ENCODE measurements at regions of chr1 and their contacts with region 1.

Region 1: DNA sequence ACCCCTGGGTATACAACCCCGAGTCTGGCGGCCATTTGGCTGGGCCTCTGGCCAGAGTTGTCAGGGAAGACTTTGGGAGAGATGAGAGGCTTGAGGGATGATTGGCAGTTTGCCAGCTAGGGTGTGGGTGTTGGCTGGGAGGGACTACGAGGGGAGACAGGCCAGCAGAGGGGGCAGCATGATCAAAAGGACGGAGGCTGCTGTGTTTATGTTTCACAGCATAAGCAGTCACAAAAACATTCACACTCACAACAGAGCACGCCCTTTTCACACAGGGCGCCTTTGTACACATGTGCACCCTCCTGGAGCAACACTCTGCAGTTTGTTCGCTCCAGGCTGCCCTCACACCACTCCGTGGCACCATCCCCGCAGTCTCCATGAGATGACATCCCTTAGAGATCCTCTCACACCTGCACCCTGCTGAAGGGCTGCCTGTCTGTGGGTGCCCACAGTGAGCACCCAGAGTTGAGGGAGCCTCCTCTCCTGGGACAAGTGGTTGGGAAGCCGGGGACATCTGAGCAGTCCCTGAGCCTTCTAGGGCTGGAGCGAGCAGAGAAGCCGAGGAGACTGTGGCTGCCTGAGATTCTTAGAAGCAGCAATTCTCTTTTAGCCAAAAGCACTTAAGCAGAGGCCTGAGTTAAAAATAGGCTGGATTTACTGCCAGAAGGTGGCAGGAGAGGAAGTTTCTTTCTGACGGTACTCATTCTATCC is 15.4 kb downstream of the EFNA3 start:
- DNase-seq: no peak
- H3K4me3 ChIP-seq: no peak overlapping the region
- H3K27ac ChIP-seq: peak overlapping the region; percentile 26 to 46
- H3K4me1 ChIP-seq: peaks cover 5% of the 10 kb centered on the region
- H3K27me3 ChIP-seq: no peaks in the 10 kb centered on the region
- CTCF ChIP-seq: peak in 3 of 4 experiments; percentile 54 to 79 (median 70)
- POLR2A ChIP-seq: no peak

Region 2: GRCh38 chr1:155127105-155127964 is 33.3 kb after region 1 on chr1 and contains the start of gene EFNA1:
- intact Hi-C with region 1: loop called (anchors 2 kb)
- DNase-seq: peak; percentile 93
- H3K4me3 ChIP-seq: peak within 1 kb of the TSS; percentile 71 to 80
- H3K27ac ChIP-seq: peak within 1 kb of the TSS; percentile 94 to 98
- H3K4me1 ChIP-seq: peaks cover 14% of the 10 kb centered on the region
- H3K27me3 ChIP-seq: no peaks in the 10 kb centered on the region
- CTCF ChIP-seq: peak in 1 of 4 experiments; percentile 18
- POLR2A ChIP-seq: peak; percentile 97
- total RNA-seq, gene EFNA1: 85.1 to 132 TPM

Region 3: DNA sequence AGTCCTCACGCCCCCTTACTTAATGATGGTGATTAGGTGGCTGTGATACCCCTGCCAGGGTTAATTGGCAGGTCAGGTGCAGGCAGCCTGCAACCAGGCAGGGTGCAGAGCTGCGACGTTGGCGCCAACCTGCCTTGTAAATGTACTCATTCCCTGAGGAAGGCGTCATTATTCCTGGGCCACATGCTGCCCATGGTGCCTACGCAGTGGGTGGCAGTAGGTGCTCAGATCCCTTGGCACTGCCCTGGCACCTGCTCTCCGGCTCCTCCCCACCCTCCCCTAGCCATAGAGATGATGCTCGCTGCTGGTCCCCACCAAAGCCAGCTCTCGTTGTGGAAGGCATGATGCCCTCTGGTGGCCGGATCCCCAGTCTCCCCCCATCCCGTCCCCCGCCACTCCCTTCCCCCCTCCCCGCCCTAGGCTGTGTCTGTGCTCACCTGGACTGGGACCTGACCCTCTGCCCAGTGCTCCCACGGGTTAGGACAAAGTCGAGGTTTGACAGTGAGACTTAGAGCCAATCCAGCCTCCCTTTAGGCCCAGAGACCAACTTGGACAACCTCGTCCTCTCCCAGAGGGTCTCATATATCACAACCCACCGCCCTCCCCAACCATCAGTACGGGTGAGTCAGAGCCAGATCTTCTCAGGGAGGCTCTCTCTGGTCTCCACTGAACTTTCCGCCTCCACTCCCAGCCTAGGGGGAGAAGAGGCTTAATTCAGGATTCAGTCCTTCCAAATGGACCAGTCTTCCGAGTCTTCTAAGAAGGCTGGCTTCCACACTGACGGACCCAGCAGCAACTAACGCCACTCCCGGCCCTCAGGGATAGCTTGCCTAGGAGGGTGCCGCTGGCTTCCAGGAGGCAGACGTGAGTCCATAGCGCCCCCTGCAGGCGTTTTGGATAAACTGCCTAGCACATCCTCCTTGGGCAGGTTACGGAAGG is 73.4 kb after region 1 on chr1:
- intact Hi-C with region 1: loop called (anchors 2 kb)
- DNase-seq: peak; percentile 87
- H3K4me3 ChIP-seq: no peak overlapping the region
- H3K27ac ChIP-seq: peak overlapping the region; percentile 48 to 58
- H3K4me1 ChIP-seq: peaks cover 3% of the 10 kb centered on the region
- H3K27me3 ChIP-seq: no peaks in the 10 kb centered on the region
- CTCF ChIP-seq: peak; percentile 78 to 97 (median 95)
- POLR2A ChIP-seq: no peak

Region 4: GRCh38 chr1:155323798-155324610 is 229.9 kb after region 1 on chr1:
- intact Hi-C with region 1: no loop called
- DNase-seq: peak; percentile 97
- H3K4me3 ChIP-seq: peak overlapping the region; percentile 86 to 88
- H3K27ac ChIP-seq: peak overlapping the region; percentile 95 to 97
- H3K4me1 ChIP-seq: peaks cover 4% of the 10 kb centered on the region
- H3K27me3 ChIP-seq: no peaks in the 10 kb centered on the region
- CTCF ChIP-seq: peak in 1 of 4 experiments; percentile 31
- POLR2A ChIP-seq: peak; percentile 87